Caco-2 (cell line): ENCODE measurements at regions of chrX and their contacts with region 1.

Region 1: DNA sequence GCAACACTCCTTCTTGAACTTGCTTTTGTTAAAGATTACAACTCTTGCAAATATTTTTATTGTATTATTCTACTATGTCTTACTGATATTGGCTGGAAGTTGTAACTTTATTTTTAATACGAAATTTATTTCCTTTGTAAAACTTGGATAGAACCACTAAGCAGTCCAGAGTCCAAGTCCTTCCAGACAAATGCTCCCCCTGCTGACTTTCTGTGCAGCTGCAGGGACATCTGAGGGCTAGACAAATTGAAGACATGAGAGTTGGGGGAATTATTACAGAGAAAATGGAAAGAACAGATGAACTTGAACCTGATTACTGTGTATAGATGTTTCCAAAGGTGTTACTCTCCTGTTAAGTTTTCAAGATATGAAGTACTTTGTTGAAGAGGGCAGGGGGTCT is 238.8 kb downstream of the GRIA3 start:
- DNase-seq: peak in 1 of 2 experiments; percentile 15
- H3K4me3 ChIP-seq: no peak overlapping the region
- H3K4me3 Mint-ChIP-seq: no peak overlapping the region
- H3K27ac Mint-ChIP-seq: no peak overlapping the region
- H3K4me1 ChIP-seq: no peaks in the 10 kb centered on the region
- H3K4me1 Mint-ChIP-seq: no peaks in the 10 kb centered on the region
- H3K27me3 ChIP-seq: no peaks in the 10 kb centered on the region
- H3K27me3 Mint-ChIP-seq: peaks cover 2% of the 10 kb centered on the region
- CTCF ChIP-seq: peak; percentile 33 to 59

Region 2: DNA sequence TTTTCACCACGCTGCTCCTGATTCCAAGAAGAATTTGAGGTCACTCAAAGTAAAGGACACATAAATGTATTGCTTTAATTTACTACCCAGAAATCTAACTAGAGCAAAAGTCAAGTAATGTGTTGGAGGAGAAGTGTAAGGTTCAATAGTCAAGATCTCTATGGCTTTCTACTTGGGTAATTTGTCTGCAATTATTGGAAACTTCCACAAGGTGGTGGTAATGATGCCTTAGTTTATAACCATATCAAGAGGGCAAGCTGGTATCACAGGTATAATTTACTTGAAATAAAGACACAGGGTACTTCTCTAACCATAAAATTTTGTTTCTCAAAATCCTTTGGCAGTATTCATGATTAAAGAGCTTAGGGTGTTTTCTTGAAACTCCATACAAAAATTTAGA is 249.0 kb before region 1 on chrX:
- CTCF ChIA-PET with region 1: no interaction called
- POLR2A ChIA-PET with region 1: no interaction called
- intact Hi-C with region 1: loop called (anchors 10 kb)
- DNase-seq: no peak
- H3K4me3 ChIP-seq: no peak overlapping the region
- H3K4me3 Mint-ChIP-seq: no peak overlapping the region
- H3K27ac Mint-ChIP-seq: no peak overlapping the region
- H3K4me1 ChIP-seq: peaks cover 7% of the 10 kb centered on the region
- H3K4me1 Mint-ChIP-seq: peaks cover 9% of the 10 kb centered on the region
- H3K27me3 ChIP-seq: no peaks in the 10 kb centered on the region
- H3K27me3 Mint-ChIP-seq: no peaks in the 10 kb centered on the region
- CTCF ChIP-seq: no peak

Region 3: GRCh38 chrX:123272630-123273029 is 150.2 kb before region 1 on chrX:
- CTCF ChIA-PET with region 1: no interaction called
- POLR2A ChIA-PET with region 1: no interaction called
- intact Hi-C with region 1: loop called (anchors 1 kb)
- DNase-seq: no peak
- H3K4me3 ChIP-seq: no peak overlapping the region
- H3K4me3 Mint-ChIP-seq: no peak overlapping the region
- H3K27ac Mint-ChIP-seq: no peak overlapping the region
- H3K4me1 ChIP-seq: no peaks in the 10 kb centered on the region
- H3K4me1 Mint-ChIP-seq: no peaks in the 10 kb centered on the region
- H3K27me3 ChIP-seq: no peaks in the 10 kb centered on the region
- H3K27me3 Mint-ChIP-seq: no peaks in the 10 kb centered on the region
- CTCF ChIP-seq: no peak

Region 4: GRCh38 chrX:123277821-123278423 is 145.0 kb before region 1 on chrX:
- CTCF ChIA-PET with region 1: no interaction called
- POLR2A ChIA-PET with region 1: no interaction called
- intact Hi-C with region 1: loop called (anchors 1 kb)
- DNase-seq: no peak
- H3K4me3 ChIP-seq: no peak overlapping the region
- H3K4me3 Mint-ChIP-seq: no peak overlapping the region
- H3K27ac Mint-ChIP-seq: no peak overlapping the region
- H3K4me1 ChIP-seq: no peaks in the 10 kb centered on the region
- H3K4me1 Mint-ChIP-seq: no peaks in the 10 kb centered on the region
- H3K27me3 ChIP-seq: no peaks in the 10 kb centered on the region
- H3K27me3 Mint-ChIP-seq: no peaks in the 10 kb centered on the region
- CTCF ChIP-seq: peak in 1 of 2 experiments; percentile 3